ENCODE measurements at regions of chr2 and their contacts with region 1.

Region 1: GRCh38 chr2:41869542-41870264 is 178.1 kb upstream of the PKDCC start:
- DNase-seq: peak; percentile 23
- H3K4me3 ChIP-seq: no peak overlapping the region
- H3K27ac ChIP-seq: no peak overlapping the region
- H3K4me1 ChIP-seq: no peaks in the 10 kb centered on the region
- H3K27me3 ChIP-seq: no peaks in the 10 kb centered on the region
- CTCF ChIP-seq: peak; percentile 73 to 86

Region 2: DNA sequence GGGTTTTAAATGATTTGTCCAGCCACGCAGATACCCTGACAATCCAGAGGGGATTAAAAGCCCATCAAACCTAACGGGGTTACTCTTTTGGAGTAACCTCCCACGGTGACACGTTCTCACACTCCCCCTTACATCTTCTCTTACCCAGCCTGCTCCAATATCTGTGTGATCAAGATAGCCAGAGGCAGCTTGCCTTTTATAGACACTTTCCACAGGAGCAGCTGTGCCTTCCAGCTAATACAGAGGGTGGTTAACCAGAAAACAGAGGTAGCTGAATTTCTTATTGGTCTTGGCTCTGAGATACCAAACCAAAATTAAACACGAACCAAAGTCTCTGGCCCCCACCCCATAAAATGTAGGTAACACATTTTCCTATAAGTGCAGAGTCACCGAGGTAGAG is 54.7 kb before region 1 on chr2:
- CTCF ChIA-PET with region 1: no interaction called
- dilution Hi-C with region 1: no loop called
- in situ Hi-C with region 1: no loop called
- intact Hi-C with region 1: no loop called
- DNase-seq: no peak
- H3K4me3 ChIP-seq: no peak overlapping the region
- H3K27ac ChIP-seq: no peak overlapping the region
- H3K4me1 ChIP-seq: no peaks in the 10 kb centered on the region
- H3K27me3 ChIP-seq: no peaks in the 10 kb centered on the region
- CTCF ChIP-seq: no peak

Region 3: DNA sequence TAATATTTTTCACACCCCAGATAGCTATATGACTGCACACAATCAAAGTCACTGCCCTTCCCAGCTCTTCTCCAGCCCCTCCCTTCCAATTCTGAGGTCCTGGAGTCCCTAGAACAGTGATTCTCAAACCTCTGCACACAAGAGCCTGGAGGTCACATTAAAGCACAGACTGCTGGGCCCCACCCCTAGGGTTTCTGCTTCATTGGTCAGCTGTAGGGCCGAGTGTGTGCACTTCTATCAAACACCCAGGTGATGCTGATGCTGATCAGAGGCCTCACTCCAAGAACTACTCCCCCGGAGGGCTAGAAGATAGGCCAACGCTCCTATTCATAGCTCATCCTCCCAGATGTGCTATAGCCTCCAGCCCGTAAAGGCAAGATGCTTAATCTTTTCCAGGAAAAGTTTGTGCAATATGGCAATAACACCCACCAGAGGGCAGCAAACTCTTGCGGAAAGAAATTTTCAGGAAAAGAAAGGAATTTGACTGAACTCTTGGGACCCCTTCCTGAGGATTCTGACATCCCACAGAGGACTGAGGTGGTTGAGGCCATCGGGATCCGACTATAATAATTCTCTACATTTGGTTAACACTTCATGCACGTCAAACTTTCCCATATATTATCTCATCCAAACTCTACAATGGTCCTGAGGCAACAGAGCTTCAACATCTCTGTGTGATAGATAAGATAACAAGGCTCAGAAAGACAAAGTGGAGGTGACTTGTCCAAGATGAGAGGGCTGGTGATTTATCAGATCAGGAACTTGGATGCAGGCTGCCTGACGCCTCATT is 16.1 kb before region 1 on chr2:
- CTCF ChIA-PET with region 1: interaction called, 11 read pairs
- dilution Hi-C with region 1: no loop called
- in situ Hi-C with region 1: no loop called
- intact Hi-C with region 1: loop called (anchors 1 kb)
- DNase-seq: peak; percentile 25
- H3K4me3 ChIP-seq: no peak overlapping the region
- H3K27ac ChIP-seq: no peak overlapping the region
- H3K4me1 ChIP-seq: no peaks in the 10 kb centered on the region
- H3K27me3 ChIP-seq: no peaks in the 10 kb centered on the region
- CTCF ChIP-seq: peak; percentile 54 to 79

Region 4: GRCh38 chr2:42086500-42086953 is 216.8 kb after region 1 on chr2:
- CTCF ChIA-PET with region 1: no interaction called
- dilution Hi-C with region 1: no loop called
- in situ Hi-C with region 1: loop called in 1 of 2 experiments (anchors 5 kb)
- intact Hi-C with region 1: loop called (anchors 1 kb)
- DNase-seq: peak; percentile 46
- H3K4me3 ChIP-seq: no peak overlapping the region
- H3K27ac ChIP-seq: no peak overlapping the region
- H3K4me1 ChIP-seq: peaks cover 1% of the 10 kb centered on the region
- H3K27me3 ChIP-seq: no peaks in the 10 kb centered on the region
- CTCF ChIP-seq: peak; percentile 62 to 72

Region 5: DNA sequence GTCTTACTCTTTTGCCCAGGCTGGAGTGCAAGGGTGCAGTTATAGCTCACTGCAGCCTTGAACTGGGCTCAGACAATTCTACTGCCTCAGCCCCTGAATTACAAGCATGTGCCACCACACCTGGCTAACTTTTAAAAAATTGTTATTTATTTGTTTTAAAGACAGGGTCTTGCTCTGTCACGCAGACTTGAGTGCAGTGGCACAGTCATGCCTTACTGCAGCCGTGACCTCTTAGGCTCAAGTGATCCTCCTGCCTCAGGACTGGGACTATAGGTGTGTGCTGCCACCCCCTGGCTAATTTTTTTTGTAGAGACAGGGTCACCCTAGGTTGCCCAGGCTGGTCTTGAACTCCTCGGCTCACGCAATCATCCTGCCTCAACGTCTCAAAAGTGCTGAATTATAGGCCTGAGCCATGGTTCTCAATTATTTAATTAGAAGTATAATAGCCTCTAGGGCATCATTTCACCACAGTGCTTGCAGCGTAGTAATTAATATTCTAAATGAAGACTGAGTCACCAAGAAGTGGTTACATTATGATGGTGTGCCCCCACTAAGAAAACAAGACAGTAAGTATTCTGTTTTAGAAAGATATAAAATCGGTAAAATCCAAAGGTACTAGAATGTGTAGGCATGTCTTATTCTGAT is 369.1 kb after region 1 on chr2:
- CTCF ChIA-PET with region 1: no interaction called
- dilution Hi-C with region 1: no loop called
- in situ Hi-C with region 1: loop called in 1 of 2 experiments (anchors 25 kb)
- intact Hi-C with region 1: loop called (anchors 5 kb)
- DNase-seq: peak; percentile 23
- H3K4me3 ChIP-seq: peak overlapping the region in 1 of 3 experiments; percentile 11
- H3K27ac ChIP-seq: no peak overlapping the region
- H3K4me1 ChIP-seq: peaks cover 13% of the 10 kb centered on the region
- H3K27me3 ChIP-seq: no peaks in the 10 kb centered on the region
- CTCF ChIP-seq: peak; percentile 29 to 63

Region 6: DNA sequence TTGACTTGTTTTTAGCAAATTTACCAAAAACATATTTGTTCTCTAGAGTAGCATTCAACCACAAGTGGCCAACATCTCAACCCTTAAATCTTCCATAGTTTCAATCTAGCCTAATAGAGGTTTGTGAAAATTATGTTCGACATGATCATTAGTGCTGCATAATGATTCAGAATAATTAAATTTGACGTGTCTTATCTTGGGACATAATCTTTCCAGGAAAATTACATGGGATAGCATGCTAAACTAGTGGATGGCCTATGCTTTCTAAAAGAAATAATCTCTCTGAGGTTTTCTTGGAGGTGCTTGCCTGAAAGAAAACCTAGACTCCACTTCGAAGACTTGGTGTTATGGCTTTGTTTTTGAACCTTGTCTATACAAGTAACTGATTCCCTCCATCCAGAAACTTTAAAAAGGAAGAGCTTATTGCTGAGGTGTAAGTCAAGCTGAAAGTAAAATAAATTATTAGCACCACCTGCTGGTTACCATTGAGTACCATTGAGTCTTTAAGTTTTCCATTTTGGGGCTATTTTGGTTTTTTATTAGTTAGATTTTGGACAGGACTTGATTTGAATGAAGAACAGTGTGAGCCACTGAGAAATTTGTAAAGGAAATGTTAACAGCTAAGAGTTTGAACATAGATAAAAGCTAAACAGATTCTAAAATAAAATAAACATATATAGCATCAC is 458.6 kb after region 1 on chr2:
- CTCF ChIA-PET with region 1: interaction called, 4 read pairs
- dilution Hi-C with region 1: no loop called
- in situ Hi-C with region 1: no loop called
- intact Hi-C with region 1: loop called (anchors 5 kb)
- DNase-seq: peak; percentile 6
- H3K4me3 ChIP-seq: no peak overlapping the region
- H3K27ac ChIP-seq: no peak overlapping the region
- H3K4me1 ChIP-seq: no peaks in the 10 kb centered on the region
- H3K27me3 ChIP-seq: no peaks in the 10 kb centered on the region
- CTCF ChIP-seq: peak; percentile 42 to 49

Measured in mammary epithelial cell (primary cell).